Left ventricle myocardium superior (tissue), 1 donor: ENCODE measurements at regions of chr17 and their contacts with region 1.

Region 1: GRCh38 chr17:34199932-34200534 is 55.1 kb upstream of the CCL2 start:
- DNase-seq: peak; percentile 50
- ATAC-seq: peak; percentile 90

Region 2: DNA sequence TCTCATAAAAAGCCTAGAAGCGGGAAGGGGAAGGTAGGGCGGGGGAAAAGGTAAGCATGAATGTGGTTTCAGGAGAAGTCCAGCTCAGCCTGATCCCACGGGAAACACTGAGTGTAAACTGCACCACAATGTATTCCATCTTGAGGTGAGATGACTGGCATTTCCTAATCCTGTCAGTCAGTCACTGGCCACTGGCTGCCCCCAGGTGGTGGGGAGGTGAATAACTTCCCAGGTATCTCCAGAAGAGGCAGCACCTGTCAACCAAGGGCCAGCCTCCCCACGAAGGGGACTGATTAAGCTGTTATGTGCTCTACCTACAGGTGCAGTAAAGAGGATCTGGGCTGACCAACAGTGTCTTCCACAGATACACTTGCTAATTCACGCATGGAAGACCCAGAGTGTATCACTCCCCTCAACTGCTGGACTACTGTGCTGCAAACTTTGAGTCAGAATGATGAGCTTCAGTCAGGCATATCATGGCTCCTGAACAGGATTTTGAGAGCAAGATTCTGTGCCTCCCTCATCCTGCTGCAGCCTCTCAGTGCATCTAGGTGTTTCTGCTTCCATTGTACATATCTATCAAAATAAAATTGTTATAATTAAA is 53.5 kb before region 1 on chr17:
- intact Hi-C with region 1: no loop called
- DNase-seq: peak; percentile 69
- ATAC-seq: peak; percentile 72

Region 3: GRCh38 chr17:34306466-34306865 is 106.4 kb after region 1 on chr17:
- intact Hi-C with region 1: loop called (anchors 2 kb)
- DNase-seq: no peak
- ATAC-seq: peak; percentile 86

Region 4: DNA sequence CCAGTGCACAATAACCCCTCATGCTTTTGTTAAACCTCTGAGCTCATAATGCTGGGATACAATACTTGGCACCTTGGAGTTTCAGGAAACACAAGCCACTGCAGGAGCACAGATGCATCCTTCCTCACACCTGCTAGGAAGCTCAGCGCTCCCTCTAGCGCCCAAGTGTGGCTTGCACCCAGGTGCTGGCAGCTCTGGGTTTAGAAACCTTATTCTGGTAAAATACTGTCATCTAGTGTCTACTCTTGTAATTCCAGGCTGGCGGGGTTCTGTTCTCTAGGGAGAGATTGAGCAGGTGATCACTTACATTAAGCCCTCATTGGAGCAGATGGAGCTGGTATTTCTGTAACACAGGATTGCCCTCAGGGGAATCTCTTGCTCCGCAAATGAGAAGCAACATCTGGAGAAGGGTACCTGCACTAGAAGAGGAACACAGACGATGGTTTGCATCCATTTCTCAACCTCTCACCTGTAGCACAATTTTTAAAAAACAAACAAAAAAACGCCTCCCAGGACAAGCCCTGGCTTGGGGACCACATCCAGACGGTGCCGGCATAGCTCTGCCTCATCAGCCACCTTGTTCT is 161.5 kb after region 1 on chr17:
- intact Hi-C with region 1: loop called (anchors 1 kb)
- DNase-seq: peak; percentile 94
- ATAC-seq: peak; percentile 97

Region 5: DNA sequence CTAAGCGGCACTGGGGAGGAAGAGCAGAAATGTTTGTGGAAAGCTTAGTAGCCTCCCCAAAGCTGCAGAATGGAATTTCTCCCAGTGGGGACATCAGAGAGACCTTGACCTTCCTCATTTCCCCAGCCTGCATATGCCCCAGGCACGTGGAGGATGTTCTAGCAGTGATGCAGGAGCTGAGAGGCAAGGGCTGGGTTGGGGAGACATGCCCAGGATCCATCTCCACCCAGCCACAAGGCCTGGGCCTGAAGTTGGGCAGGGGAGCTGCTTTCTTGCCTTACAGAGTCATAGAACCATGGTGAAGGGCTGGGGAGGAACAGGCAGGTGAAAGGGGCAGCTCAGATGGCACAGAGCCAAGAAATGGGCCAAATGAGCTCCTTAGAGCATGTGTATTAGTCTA is 483.4 kb after region 1 on chr17:
- intact Hi-C with region 1: no loop called
- DNase-seq: no peak
- ATAC-seq: no peak